ENCODE measurements at regions of chr15 and their contacts with region 1.

Region 1: DNA sequence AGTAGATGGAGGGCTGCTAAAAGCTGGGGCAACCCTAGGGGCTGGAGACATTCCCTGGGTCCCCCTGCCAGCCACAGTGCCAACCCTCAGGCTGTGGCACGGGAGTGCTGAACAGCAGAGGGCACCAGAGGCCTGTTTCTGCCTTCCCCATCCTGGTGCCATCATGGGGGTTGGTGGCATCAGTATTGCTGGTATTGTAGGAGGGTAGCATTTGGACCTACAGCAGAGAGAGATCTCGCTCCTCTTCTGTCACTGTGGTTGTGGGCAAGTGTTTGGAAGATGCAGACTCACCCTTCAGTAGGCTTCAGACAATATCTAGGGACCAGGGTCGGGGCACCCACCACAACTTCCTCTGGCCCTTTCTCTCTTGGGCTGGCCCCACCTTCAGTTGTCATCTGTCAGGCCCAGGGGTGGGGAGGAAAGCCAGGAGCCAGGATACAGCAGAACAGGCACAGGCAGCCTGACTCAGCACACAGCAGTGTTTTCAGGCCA is 123.5 kb downstream of the RPLP1 start:
- DNase-seq: peak; percentile 82
- H3K4me3 Mint-ChIP-seq: no peak overlapping the region
- H3K27ac Mint-ChIP-seq: no peak overlapping the region
- H3K4me1 Mint-ChIP-seq: peaks cover 37% of the 10 kb centered on the region
- H3K27me3 Mint-ChIP-seq: no peaks in the 10 kb centered on the region

Region 2: GRCh38 chr15:69523010-69524001 is 52.8 kb before region 1 on chr15:
- CTCF ChIA-PET with region 1: no interaction called
- POLR2A ChIA-PET with region 1: no interaction called
- intact Hi-C with region 1: loop called (anchors 5 kb)
- DNase-seq: peak; percentile 84
- H3K4me3 Mint-ChIP-seq: no peak overlapping the region
- H3K27ac Mint-ChIP-seq: no peak overlapping the region
- H3K4me1 Mint-ChIP-seq: peaks cover 4% of the 10 kb centered on the region
- H3K27me3 Mint-ChIP-seq: peaks cover 2% of the 10 kb centered on the region

Region 3: GRCh38 chr15:69713726-69714559 is 137.9 kb after region 1 on chr15:
- CTCF ChIA-PET with region 1: interaction called, 5 read pairs
- POLR2A ChIA-PET with region 1: no interaction called
- intact Hi-C with region 1: loop called (anchors 1 kb)
- DNase-seq: peak; percentile 89
- H3K4me3 Mint-ChIP-seq: peak overlapping the region; percentile 5
- H3K27ac Mint-ChIP-seq: peak overlapping the region; percentile 72
- H3K4me1 Mint-ChIP-seq: peaks cover 61% of the 10 kb centered on the region
- H3K27me3 Mint-ChIP-seq: peaks cover 3% of the 10 kb centered on the region

Region 4: DNA sequence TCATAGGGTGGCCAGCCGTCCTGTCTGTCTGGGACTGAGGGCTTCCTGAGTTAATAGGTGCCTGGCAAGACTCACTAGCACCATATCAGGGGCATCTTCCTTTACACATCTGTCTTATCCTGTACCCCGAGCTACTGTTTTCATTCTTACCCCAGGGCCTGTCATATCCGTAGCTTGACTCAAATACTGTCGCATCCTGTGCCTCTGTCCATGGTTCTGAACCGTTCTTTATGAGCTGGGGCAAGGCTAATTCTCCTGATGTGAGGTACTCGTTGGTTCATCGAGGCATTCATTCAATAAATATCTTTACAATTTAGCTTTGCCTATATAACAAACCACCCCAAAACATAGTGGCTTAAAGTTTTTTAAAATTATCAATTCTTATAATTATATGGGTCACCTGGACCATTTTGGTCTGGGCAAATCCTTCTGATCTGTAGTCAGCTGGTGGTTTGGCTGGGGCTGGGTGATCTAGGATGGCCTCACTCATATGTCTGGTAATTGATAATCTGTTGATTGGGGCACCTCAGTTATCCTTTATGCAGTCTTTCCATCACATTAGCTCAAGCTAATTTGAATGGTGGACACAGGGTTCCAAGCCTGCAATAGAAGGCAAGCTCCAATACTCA is 400.4 kb after region 1 on chr15:
- CTCF ChIA-PET with region 1: no interaction called
- POLR2A ChIA-PET with region 1: no interaction called
- intact Hi-C with region 1: loop called (anchors 10 kb)
- DNase-seq: peak; percentile 75
- H3K4me3 Mint-ChIP-seq: no peak overlapping the region
- H3K27ac Mint-ChIP-seq: no peak overlapping the region
- H3K4me1 Mint-ChIP-seq: no peaks in the 10 kb centered on the region
- H3K27me3 Mint-ChIP-seq: peaks cover 28% of the 10 kb centered on the region

Region 5: DNA sequence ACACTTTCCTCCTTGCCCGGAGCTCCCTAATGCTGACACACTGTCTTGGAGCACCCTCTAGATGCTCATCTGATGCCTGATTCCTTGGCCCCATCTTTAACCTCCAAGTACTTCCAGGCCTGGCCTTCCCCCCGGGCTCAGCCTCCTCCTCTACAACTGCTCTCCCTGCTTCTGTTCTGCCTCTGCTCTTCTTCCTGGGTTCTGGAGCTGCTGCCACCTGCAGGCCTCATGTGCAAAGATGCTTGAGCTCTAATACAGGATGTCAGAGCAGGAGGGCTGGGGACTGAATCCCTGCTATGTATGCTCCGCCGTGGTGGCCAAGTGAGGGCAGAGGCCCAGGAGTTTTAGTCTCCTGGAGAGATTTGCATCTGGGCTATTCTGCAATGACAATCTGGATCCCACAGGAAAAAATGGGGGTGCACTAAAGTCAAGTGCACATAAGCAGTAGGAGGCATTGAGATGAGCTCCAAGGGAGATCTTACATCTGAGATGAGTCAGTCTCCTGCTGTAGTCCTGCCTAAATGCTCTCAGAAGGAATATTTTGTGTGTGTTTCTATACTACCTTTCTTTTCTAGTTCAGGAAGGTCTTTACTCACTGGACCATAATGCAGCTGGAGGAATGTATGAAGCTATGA is 890.9 kb after region 1 on chr15:
- CTCF ChIA-PET with region 1: interaction called, 16 read pairs
- POLR2A ChIA-PET with region 1: no interaction called
- intact Hi-C with region 1: no loop called
- DNase-seq: peak; percentile 66
- H3K4me3 Mint-ChIP-seq: no peak overlapping the region
- H3K27ac Mint-ChIP-seq: no peak overlapping the region
- H3K4me1 Mint-ChIP-seq: no peaks in the 10 kb centered on the region
- H3K27me3 Mint-ChIP-seq: peaks cover 22% of the 10 kb centered on the region